MCF 10A (cell line): ENCODE measurements at regions of chr5 and their contacts with region 1.

Region 1: DNA sequence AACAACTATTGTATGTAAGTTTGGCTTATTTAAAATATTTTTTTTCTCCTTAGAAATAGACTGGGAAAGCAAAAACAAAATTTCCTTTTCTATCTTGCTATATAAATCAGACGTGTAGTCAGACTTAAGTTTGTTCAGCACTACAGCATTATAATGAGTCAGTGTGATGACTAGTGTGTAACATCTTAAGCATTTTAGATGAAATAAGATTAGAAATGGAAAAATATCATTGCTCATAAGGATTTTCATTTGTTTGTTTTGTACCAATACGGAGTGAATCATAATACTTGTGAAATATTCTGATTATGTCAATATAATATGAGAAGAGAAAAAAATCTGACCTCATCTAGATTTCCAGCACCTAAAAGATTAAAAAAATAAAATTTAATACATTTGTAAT is 64.7 kb upstream of the RICTOR start:
- DNase-seq: peak; percentile 69
- H3K4me3 Mint-ChIP-seq: no peak overlapping the region
- H3K27ac Mint-ChIP-seq: peak overlapping the region; percentile 53
- H3K4me1 Mint-ChIP-seq: peaks cover 25% of the 10 kb centered on the region
- H3K27me3 Mint-ChIP-seq: no peaks in the 10 kb centered on the region
- CTCF ChIP-seq: no peak

Region 2: DNA sequence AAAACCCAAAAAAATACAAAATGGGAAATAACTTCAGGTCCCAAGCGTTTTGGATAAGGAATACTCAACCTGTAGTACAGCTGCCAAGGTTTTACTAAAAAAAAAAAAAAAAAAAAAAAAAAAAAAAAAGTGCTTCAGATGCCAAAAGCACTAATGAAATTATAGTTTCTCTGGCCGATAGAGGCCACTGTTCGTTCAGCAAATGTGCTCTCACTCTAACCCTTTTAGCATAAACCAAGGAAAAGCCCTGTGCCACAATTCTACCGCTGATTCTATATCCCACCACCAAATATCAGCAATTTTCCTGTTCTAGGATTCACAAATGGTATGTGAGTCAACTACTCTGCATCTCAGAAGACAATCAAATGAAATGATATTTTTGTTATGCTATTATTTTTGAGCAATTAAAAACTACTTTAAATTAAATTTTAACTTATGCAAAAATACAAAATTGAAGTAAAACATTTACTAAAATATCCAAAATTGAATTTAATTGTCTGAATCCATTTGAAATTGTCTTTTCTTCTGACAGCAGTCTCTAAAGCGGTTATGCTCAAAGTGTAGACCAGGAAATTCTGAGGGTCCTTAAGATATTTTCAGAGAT is 144.5 kb before region 1 on chr5:
- CTCF ChIA-PET with region 1: no interaction called
- POLR2A ChIA-PET with region 1: no interaction called
- intact Hi-C with region 1: loop called (anchors 5 kb)
- DNase-seq: peak; percentile 76
- H3K4me3 Mint-ChIP-seq: no peak overlapping the region
- H3K27ac Mint-ChIP-seq: no peak overlapping the region
- H3K4me1 Mint-ChIP-seq: peaks cover 6% of the 10 kb centered on the region
- H3K27me3 Mint-ChIP-seq: no peaks in the 10 kb centered on the region
- CTCF ChIP-seq: peak; percentile 45

Region 3: DNA sequence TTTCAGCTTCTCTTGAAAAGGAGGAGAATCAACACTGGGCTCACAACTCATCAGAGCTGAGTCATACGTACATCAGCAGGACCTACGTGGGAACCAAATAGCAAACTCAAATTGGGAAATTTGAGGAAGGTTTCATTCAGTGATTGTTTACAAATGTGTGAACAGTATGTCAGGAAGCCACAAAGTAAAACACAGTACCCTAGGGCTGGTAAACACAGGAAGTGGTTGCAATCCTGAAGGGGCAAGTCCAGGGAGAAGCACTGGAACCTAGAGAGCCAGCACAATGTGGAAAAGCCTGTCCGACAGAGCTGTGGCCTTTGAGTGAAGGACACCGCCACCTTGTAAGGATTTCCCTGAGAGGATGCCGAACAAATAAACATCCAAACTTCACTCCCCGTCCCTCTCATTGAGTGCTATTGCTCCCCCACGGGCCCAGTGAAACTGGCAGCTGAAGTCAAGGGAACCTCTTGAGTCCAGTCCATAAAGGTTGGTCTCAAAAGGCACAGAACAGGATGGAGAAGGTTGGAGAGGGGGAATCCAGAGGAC is 38.0 kb before region 1 on chr5:
- CTCF ChIA-PET with region 1: interaction called, 3 read pairs
- POLR2A ChIA-PET with region 1: interaction called, 5 read pairs
- intact Hi-C with region 1: loop called (anchors 2 kb)
- DNase-seq: peak; percentile 98
- H3K4me3 Mint-ChIP-seq: peak overlapping the region; percentile 39
- H3K27ac Mint-ChIP-seq: peak overlapping the region; percentile 97
- H3K4me1 Mint-ChIP-seq: peaks cover 51% of the 10 kb centered on the region
- H3K27me3 Mint-ChIP-seq: no peaks in the 10 kb centered on the region
- CTCF ChIP-seq: no peak

Region 4: GRCh38 chr5:39167141-39167972 is 28.5 kb after region 1 on chr5:
- CTCF ChIA-PET with region 1: no interaction called
- POLR2A ChIA-PET with region 1: no interaction called
- intact Hi-C with region 1: no loop called
- DNase-seq: peak; percentile 10
- H3K4me3 Mint-ChIP-seq: no peak overlapping the region
- H3K27ac Mint-ChIP-seq: no peak overlapping the region
- H3K4me1 Mint-ChIP-seq: peaks cover 7% of the 10 kb centered on the region
- H3K27me3 Mint-ChIP-seq: no peaks in the 10 kb centered on the region
- CTCF ChIP-seq: no peak

Region 5: DNA sequence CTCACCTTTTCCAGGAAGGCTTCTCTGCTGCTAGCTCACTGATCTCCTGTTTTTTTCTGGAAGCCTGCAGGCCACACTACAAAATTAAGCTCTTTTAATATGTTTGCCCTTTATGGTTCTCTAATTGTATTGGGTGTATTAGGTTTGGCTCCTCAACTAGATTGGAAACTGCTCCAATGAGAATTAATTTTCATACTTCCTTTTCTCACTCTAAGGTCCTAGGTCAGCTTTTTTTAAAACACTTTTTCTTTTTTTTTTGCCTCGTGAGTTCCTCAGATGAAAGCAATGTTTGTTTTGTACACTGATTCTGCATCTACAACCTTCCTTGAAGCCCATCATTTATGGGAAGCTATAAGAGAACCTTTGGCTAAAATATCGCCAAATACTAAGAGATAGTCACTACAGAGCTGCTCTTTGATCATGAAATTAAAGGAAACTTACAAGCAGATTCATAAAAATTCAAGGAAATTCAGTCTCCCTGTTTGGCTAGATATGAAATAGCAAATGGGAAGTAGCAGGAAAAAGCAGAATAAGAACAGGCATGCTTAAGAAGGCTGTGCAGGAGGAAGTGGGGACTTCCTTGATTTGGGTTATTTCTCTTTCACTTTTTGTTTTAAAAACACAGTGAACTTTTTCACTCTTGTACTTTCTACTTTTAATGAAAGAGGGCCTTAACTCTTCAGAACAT is 135.7 kb after region 1 on chr5:
- CTCF ChIA-PET with region 1: no interaction called
- POLR2A ChIA-PET with region 1: no interaction called
- intact Hi-C with region 1: no loop called
- DNase-seq: no peak
- H3K4me3 Mint-ChIP-seq: no peak overlapping the region
- H3K27ac Mint-ChIP-seq: no peak overlapping the region
- H3K4me1 Mint-ChIP-seq: no peaks in the 10 kb centered on the region
- H3K27me3 Mint-ChIP-seq: no peaks in the 10 kb centered on the region
- CTCF ChIP-seq: no peak